ENCODE measurements at regions of chr7 and their contacts with region 1.

Region 1: GRCh38 chr7:25851332-25852210 is 300.4 kb upstream of the NFE2L3 start:
- DNase-seq: peak; percentile 81 to 85
- ATAC-seq: peak; percentile 70 to 83 (median 76)
- H3K4me3 ChIP-seq: peak overlapping the region in 3 of 10 donors; percentile 18 to 39 (median 27)
- H3K27ac ChIP-seq: peak overlapping the region in 7 of 10 donors; percentile 12 to 84 (median 51)
- H3K4me1 ChIP-seq: peaks cover 6 to 77% (median 48%) of the 10 kb centered on the region in 9 donors
- H3K27me3 ChIP-seq: peaks cover 12 to 70% (median 56%) of the 10 kb centered on the region in 7 donors
- CTCF ChIP-seq: peak; percentile 71 to 87 (median 83)

Region 2: DNA sequence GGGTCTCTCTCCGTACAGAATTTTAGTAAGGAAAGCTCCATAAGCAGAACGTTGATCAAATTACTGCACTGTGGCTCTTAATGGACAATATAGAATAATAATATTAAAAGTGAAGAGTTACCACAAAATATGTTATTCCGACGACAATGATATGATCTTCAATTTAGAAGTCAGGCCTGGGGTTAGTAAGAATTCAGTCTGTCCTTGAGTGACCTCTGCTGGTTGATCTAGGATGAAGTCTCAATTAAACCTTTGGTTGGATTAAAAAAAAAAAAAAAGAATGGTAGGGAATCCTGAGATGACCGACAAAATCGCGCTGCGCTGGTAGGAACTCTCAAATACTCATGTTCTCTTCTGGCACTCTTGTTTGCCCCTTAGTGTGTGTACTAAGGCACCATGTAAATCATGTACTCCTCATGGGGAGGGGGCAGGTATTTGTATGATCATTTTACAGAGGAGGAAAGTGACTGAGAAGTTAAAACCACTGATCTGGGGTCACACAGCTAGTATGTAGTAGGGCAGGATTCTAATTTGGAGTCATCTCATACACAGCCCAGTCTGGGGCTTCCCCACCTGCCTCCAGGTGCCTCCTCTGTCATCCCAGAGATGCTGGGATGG is 462.0 kb before region 1 on chr7:
- intact Hi-C with region 1: loop called (anchors 1 to 5 kb)
- DNase-seq: peak in 1 of 2 donors; percentile 21
- ATAC-seq: peak in 6 of 8 donors; percentile 34 to 50 (median 36)
- H3K4me3 ChIP-seq: no peak overlapping the region
- H3K27ac ChIP-seq: no peak overlapping the region
- H3K4me1 ChIP-seq: peaks cover 0 to 18% (median 4%) of the 10 kb centered on the region in 9 donors
- H3K27me3 ChIP-seq: peaks cover 0 to 5% (median 0%) of the 10 kb centered on the region in 7 donors
- CTCF ChIP-seq: peak; percentile 9 to 70 (median 51)

Region 3: DNA sequence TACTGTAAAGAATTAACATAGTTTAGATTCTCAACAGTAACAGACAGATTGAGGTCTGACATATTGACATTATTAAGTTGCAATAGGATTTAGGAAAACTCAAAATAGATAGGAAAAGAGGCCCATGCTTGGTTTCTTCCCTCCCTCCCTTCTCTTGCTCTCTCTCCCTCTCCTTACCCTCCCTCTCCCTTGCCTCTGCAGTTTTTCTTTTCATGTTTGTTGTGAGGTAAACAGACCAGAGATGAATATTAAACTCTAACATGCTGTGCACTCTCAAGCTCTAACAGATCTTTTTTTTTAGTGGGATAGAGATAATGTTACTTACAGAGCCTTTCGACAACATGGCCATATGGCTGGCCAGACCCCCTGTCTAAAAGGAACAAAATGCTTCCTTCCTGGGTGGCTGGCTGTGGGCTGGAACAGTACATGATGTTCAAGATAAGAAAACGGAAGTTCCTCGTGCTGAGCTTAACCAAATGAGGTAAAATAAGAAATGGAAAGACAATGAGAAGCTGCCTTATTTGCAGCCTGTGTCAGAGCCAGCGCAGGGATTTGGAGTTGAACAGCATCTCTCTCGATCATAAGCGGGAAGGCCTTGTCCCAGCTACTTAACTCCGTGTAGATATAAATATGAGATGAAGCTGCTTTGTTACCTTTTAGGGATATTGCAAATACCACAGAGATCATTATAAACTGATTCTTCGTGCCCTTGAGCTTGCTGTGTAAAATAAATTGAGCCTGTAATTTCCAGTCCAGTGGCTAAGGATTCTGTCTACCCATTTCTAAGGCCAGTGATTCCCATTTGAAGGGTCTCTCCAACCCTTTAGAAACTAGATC is 231.4 kb before region 1 on chr7:
- intact Hi-C with region 1: loop called in 1 of 10 experiments (anchors 5 kb)
- DNase-seq: peak in 1 of 2 donors; percentile 15
- ATAC-seq: peak in 7 of 8 donors; percentile 25 to 84 (median 58)
- H3K4me3 ChIP-seq: no peak overlapping the region
- H3K27ac ChIP-seq: peak overlapping the region; percentile 36 to 77 (median 58)
- H3K4me1 ChIP-seq: peaks cover 0 to 55% (median 40%) of the 10 kb centered on the region in 9 donors
- H3K27me3 ChIP-seq: no peaks in the 10 kb centered on the region
- CTCF ChIP-seq: no peak

Region 4: GRCh38 chr7:25653384-25653783 is 198.2 kb before region 1 on chr7:
- intact Hi-C with region 1: no loop called
- DNase-seq: no peak
- ATAC-seq: no peak
- H3K4me3 ChIP-seq: no peak overlapping the region
- H3K27ac ChIP-seq: no peak overlapping the region
- H3K4me1 ChIP-seq: peaks cover 0 to 25% (median 9%) of the 10 kb centered on the region in 9 donors
- H3K27me3 ChIP-seq: no peaks in the 10 kb centered on the region
- CTCF ChIP-seq: no peak

Region 5: DNA sequence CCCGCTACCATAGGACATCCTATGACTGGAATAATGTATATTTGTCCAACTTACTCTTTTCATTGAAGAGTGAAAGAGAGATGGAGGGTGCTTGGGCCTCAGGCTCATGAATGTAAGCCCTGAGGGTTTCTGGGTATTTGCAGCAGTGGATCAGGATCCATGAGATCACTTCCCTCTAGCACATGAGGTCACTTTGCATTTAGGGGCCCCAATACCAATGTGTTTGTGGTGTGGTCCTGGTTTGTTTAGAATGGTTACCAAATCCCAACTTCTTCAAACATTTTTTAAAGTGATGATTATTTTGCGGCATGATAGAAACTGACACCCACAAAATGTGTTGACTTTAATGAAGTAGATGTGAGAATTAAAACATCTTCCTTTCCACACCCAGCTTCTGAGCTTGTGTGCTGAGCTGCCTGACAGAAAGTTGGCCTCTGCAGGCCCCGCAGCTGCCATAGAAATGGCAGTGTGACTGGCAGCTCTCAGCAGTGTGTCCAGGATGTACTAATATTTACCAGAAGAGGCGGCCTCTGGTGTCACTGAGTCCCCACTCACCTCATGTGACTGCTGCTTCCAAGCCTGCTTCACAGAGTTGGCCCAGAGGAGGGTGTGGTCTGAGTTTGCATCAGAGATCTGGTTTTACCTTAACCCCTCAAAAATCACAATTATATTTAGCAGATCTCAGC is 175.6 kb before region 1 on chr7:
- intact Hi-C with region 1: loop called in 1 of 10 experiments (anchors 5 kb)
- DNase-seq: peak in 1 of 2 donors; percentile 27
- ATAC-seq: peak in 7 of 8 donors; percentile 41 to 98 (median 69)
- H3K4me3 ChIP-seq: no peak overlapping the region
- H3K27ac ChIP-seq: no peak overlapping the region
- H3K4me1 ChIP-seq: peaks cover 0 to 17% (median 0%) of the 10 kb centered on the region in 9 donors
- H3K27me3 ChIP-seq: no peaks in the 10 kb centered on the region
- CTCF ChIP-seq: no peak

Region 6: GRCh38 chr7:25789701-25790640 is 61.6 kb before region 1 on chr7:
- intact Hi-C with region 1: loop called in 1 of 10 experiments (anchors 5 kb)
- DNase-seq: no peak
- ATAC-seq: peak in 7 of 8 donors; percentile 18 to 58 (median 37)
- H3K4me3 ChIP-seq: no peak overlapping the region
- H3K27ac ChIP-seq: peak overlapping the region in 6 of 10 donors; percentile 26 to 71 (median 46)
- H3K4me1 ChIP-seq: peaks cover 0 to 21% (median 2%) of the 10 kb centered on the region in 9 donors
- H3K27me3 ChIP-seq: no peaks in the 10 kb centered on the region
- CTCF ChIP-seq: no peak

Region 7: GRCh38 chr7:25812086-25812850 is 39.3 kb before region 1 on chr7:
- intact Hi-C with region 1: no loop called
- DNase-seq: no peak
- ATAC-seq: no peak
- H3K4me3 ChIP-seq: no peak overlapping the region
- H3K27ac ChIP-seq: no peak overlapping the region
- H3K4me1 ChIP-seq: no peaks in the 10 kb centered on the region
- H3K27me3 ChIP-seq: peaks cover 0 to 5% (median 0%) of the 10 kb centered on the region in 7 donors
- CTCF ChIP-seq: no peak

Region 8: DNA sequence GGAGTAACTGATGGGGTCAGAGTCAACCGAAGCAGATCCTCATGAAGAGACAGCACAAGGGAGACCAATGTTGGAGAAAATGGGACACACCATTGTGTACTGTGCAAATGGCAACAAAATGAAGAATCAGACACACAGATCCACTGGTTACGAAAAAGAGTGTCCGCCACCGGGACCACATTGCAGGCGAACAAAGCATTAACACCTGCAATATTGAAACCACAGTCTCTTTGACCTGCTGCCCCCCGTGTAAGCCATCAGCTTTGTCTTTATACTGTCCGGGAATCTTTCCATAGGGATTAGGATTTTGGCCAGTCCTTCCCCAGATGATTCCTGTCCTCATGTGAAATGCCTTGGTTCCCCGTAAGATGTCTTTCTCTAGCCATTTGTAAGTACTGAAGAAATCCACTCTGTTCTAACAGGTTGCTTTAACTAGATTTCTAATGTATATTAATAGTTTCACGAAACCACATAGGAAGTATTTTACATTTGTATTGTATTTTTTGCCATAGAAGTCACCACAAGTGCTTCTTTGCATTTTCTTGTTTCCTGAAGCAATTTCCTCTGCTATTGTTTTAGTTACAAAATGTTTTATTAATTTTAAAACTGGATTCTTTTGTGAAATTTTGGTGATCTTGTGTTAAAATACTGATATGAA is 159.6 kb after region 1 on chr7:
- intact Hi-C with region 1: no loop called
- DNase-seq: no peak
- ATAC-seq: no peak
- H3K4me3 ChIP-seq: no peak overlapping the region
- H3K27ac ChIP-seq: no peak overlapping the region
- H3K4me1 ChIP-seq: no peaks in the 10 kb centered on the region
- H3K27me3 ChIP-seq: peaks cover 0 to 15% (median 6%) of the 10 kb centered on the region in 7 donors
- CTCF ChIP-seq: no peak

Measured in heart right ventricle (tissue), 16 donors.